Mammary epithelial cell (primary cell): ENCODE measurements at regions of chr1 and their contacts with region 1.

Region 1: GRCh38 chr1:58848818-58849411 is 65.1 kb upstream of the JUN start:
- DNase-seq: peak; percentile 100
- H3K4me3 ChIP-seq: no peak overlapping the region
- H3K27ac ChIP-seq: peak overlapping the region; percentile 76
- H3K4me1 ChIP-seq: peaks cover 35% of the 10 kb centered on the region
- H3K27me3 ChIP-seq: no peaks in the 10 kb centered on the region
- CTCF ChIP-seq: peak in 1 of 2 donors; percentile 34

Region 2: GRCh38 chr1:57586842-57587241 is 1262.1 kb before region 1 on chr1:
- CTCF ChIA-PET with region 1: no interaction called
- dilution Hi-C with region 1: no loop called
- in situ Hi-C with region 1: no loop called
- intact Hi-C with region 1: no loop called
- DNase-seq: no peak
- H3K4me3 ChIP-seq: no peak overlapping the region
- H3K27ac ChIP-seq: no peak overlapping the region
- H3K4me1 ChIP-seq: peaks cover 11% of the 10 kb centered on the region
- H3K27me3 ChIP-seq: no peaks in the 10 kb centered on the region
- CTCF ChIP-seq: no peak

Region 3: DNA sequence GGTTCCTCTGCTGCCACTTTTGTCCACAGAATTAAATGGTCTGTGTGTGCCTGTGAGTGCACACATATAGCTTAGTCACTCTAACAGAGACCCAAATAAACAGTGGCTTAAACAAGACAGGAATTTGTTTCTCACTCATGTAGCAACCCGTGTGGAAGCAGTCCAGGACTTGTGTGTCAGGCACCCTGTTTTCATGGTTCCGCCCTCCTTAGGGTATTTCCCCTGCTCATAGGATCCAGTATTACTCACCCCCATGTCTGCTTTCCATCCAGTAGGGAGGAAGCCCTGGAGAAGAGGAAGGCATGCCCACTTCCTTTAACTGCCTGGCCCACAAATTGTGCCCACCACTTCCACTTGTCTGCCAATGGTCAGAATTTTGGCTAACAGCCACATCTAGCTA is 230.6 kb before region 1 on chr1:
- CTCF ChIA-PET with region 1: no interaction called
- dilution Hi-C with region 1: no loop called
- in situ Hi-C with region 1: no loop called
- intact Hi-C with region 1: no loop called
- DNase-seq: peak; percentile 99
- H3K4me3 ChIP-seq: no peak overlapping the region
- H3K27ac ChIP-seq: peak overlapping the region; percentile 84
- H3K4me1 ChIP-seq: peaks cover 24% of the 10 kb centered on the region
- H3K27me3 ChIP-seq: no peaks in the 10 kb centered on the region
- CTCF ChIP-seq: no peak

Region 4: GRCh38 chr1:58688931-58689566 is 159.9 kb before region 1 on chr1:
- CTCF ChIA-PET with region 1: no interaction called
- dilution Hi-C with region 1: no loop called
- in situ Hi-C with region 1: no loop called
- intact Hi-C with region 1: no loop called
- DNase-seq: no peak
- H3K4me3 ChIP-seq: no peak overlapping the region
- H3K27ac ChIP-seq: no peak overlapping the region
- H3K4me1 ChIP-seq: no peaks in the 10 kb centered on the region
- H3K27me3 ChIP-seq: no peaks in the 10 kb centered on the region
- CTCF ChIP-seq: no peak

Region 5: DNA sequence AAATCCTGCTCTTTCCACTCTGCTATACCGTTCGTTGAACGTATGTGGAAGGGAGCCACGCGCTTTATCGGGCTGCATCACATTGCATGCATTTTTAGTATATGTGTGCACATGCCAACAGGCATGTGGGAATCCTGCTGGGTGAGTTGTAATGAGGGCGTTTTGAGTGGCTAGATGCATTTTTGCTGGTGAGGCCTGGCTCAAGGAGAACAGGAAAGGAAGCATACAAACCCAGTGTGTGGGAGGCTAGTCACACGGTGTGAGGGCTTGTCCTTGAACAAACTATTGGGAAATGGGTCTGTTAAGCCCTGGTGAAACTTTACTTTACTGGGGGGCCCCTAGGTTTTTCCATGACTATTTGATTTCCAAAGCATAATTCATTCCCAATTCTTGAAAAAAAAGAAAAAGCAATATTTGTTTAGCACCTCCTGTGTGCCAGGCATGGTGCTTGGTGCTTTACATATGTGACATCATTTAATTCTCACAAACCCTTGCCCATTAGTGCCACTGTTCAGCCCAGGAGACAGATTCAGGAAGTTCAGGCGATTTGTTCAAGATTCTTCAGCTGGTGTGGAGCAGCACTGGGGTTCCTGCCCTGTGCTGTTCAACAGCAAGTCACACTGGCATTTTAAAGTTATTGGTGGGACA is 39.5 kb before region 1 on chr1:
- CTCF ChIA-PET with region 1: no interaction called
- dilution Hi-C with region 1: no loop called
- in situ Hi-C with region 1: no loop called
- intact Hi-C with region 1: no loop called
- DNase-seq: peak; percentile 79
- H3K4me3 ChIP-seq: no peak overlapping the region
- H3K27ac ChIP-seq: peak overlapping the region; percentile 68
- H3K4me1 ChIP-seq: peaks cover 46% of the 10 kb centered on the region
- H3K27me3 ChIP-seq: no peaks in the 10 kb centered on the region
- CTCF ChIP-seq: no peak

Region 6: DNA sequence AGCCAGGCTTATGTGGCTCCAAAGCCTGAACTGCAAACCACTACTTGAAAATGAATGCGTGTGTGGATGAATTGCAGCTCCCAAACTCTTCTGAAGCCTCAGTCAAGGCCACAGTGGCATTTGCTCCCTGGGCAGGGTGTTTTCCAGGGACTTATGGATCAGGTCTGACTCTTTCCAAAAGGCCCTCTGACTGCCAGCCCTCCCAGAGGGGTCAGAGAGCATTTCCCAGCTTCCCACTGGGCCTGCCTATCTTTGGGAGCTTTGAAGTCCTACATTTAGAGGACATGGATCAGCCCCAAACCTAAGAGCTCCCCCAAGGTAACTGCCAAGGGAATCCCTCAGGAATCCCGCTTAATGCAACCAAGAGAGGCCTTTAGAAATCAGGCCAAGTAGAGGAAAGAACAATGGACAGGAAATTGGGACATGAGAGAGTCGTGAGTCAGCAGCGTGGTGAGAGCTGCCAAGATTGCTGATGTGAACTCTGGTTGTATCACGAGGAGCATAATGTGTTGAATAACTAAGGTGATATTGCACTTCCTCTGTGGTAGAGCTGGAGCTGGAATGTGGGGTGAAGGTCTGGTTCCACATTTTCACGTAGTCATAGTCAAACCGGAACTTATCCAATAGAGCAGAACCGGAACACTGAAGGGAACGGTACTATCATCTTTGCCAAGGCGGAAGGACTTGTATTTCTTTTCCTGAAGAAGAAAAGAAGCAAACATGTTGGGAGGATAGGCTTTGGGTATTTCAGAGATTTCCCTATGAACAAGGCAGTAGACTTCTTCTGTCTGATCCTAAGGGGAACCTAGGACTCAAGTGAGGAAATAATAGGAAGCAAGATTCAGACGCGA is 34.3 kb after region 1 on chr1:
- CTCF ChIA-PET with region 1: no interaction called
- dilution Hi-C with region 1: no loop called
- in situ Hi-C with region 1: no loop called
- intact Hi-C with region 1: loop called (anchors 1 kb)
- DNase-seq: peak; percentile 96
- H3K4me3 ChIP-seq: no peak overlapping the region
- H3K27ac ChIP-seq: peak overlapping the region; percentile 78
- H3K4me1 ChIP-seq: peaks cover 38% of the 10 kb centered on the region
- H3K27me3 ChIP-seq: no peaks in the 10 kb centered on the region
- CTCF ChIP-seq: no peak

Region 7: GRCh38 chr1:58903514-58904298 is 54.8 kb after region 1 on chr1:
- CTCF ChIA-PET with region 1: no interaction called
- dilution Hi-C with region 1: no loop called
- in situ Hi-C with region 1: no loop called
- intact Hi-C with region 1: loop called (anchors 2 kb)
- DNase-seq: peak; percentile 84
- H3K4me3 ChIP-seq: peak overlapping the region; percentile 14 to 52 (median 48)
- H3K27ac ChIP-seq: peak overlapping the region; percentile 72
- H3K4me1 ChIP-seq: peaks cover 32% of the 10 kb centered on the region
- H3K27me3 ChIP-seq: no peaks in the 10 kb centered on the region
- CTCF ChIP-seq: no peak

Region 8: DNA sequence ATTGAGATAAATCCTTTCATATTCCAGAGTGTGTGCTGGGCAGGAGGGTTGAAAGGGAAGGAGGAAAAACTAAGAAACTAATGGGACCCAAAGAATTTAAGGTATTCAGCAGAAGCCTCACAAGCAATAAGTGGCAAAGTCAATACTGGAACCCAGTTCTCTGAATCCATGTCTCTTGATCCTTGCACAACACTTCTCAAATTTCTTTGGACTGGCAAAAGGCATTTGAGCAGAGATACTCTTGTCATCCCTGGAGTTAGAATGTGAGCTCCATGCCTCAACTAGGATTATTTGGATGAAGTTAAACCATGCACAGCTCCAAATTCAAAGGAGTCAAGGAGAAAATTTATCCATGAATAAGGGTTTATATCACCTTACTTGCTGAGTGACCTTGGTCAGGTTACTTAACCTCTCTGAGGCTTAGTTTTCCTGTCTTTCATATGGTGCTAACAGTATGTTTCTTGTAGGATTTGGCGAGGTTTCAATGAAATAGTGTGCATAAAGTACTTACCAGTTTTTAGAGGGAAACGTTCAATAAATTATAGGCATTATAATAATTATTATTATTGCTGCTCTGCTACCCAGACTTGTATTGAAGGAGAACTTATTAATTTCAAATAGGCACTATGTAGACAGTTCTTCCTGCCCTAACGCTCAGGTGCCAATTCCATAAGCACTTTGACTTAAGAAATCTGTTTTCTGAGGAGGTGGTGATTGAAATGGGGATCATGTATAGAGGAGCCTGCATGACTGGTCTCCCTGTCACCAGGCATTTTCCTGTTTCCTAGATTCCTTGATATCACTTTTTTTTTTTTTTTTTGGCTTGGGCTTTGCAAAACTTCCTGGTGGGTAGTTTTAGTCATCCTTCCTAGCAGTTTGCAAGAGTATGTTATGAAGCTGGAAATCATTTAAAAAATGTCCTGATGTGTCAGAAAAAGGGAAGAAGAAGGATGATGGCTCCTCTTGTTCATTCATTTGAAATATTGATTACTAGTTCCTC is 59.9 kb after region 1 on chr1:
- CTCF ChIA-PET with region 1: interaction called, 4 read pairs
- dilution Hi-C with region 1: no loop called
- in situ Hi-C with region 1: no loop called
- intact Hi-C with region 1: loop called (anchors 1 kb)
- DNase-seq: peak; percentile 77
- H3K4me3 ChIP-seq: no peak overlapping the region
- H3K27ac ChIP-seq: peak overlapping the region; percentile 1
- H3K4me1 ChIP-seq: peaks cover 36% of the 10 kb centered on the region
- H3K27me3 ChIP-seq: no peaks in the 10 kb centered on the region
- CTCF ChIP-seq: no peak

Region 9: GRCh38 chr1:59290193-59290947 is 441.5 kb after region 1 on chr1:
- CTCF ChIA-PET with region 1: interaction called, 4 read pairs
- dilution Hi-C with region 1: no loop called
- in situ Hi-C with region 1: no loop called
- intact Hi-C with region 1: loop called (anchors 5 kb)
- DNase-seq: peak; percentile 68
- H3K4me3 ChIP-seq: no peak overlapping the region
- H3K27ac ChIP-seq: no peak overlapping the region
- H3K4me1 ChIP-seq: peaks cover 3% of the 10 kb centered on the region
- H3K27me3 ChIP-seq: no peaks in the 10 kb centered on the region
- CTCF ChIP-seq: peak; percentile 48 to 59